Activated CD8-positive, alpha-beta memory T cell treated with anti-CD3 and anti-CD28 coated beads, Interleukin-2, amount 10 ng/mL, durations not matched to agents 7 days and 5 days (primary cell): ENCODE measurements at regions of chr10 and their contacts with region 1.

Region 1: GRCh38 chr10:29998142-29998808 is 61.1 kb downstream of the JCAD start:
- DNase-seq: peak; percentile 87
- ATAC-seq: peak; percentile 84
- H3K4me3 Mint-ChIP-seq: no peak overlapping the region
- H3K27ac Mint-ChIP-seq: no peak overlapping the region
- H3K4me1 Mint-ChIP-seq: peaks cover 17% of the 10 kb centered on the region
- H3K27me3 Mint-ChIP-seq: peaks cover 49% of the 10 kb centered on the region

Region 2: GRCh38 chr10:29555746-29556481 is 442.4 kb before region 1 on chr10:
- CTCF ChIA-PET with region 1: no interaction called
- DNase-seq: no peak
- ATAC-seq: no peak
- H3K4me3 Mint-ChIP-seq: no peak overlapping the region
- H3K27ac Mint-ChIP-seq: no peak overlapping the region
- H3K4me1 Mint-ChIP-seq: peaks cover 9% of the 10 kb centered on the region
- H3K27me3 Mint-ChIP-seq: no peaks in the 10 kb centered on the region

Region 3: GRCh38 chr10:30013757-30014156 is 15.5 kb after region 1 on chr10:
- CTCF ChIA-PET with region 1: interaction called, 17 read pairs
- DNase-seq: no peak
- ATAC-seq: no peak
- H3K4me3 Mint-ChIP-seq: no peak overlapping the region
- H3K27ac Mint-ChIP-seq: peak overlapping the region; percentile 37
- H3K4me1 Mint-ChIP-seq: peaks cover 34% of the 10 kb centered on the region
- H3K27me3 Mint-ChIP-seq: peaks cover 21% of the 10 kb centered on the region

Region 4: DNA sequence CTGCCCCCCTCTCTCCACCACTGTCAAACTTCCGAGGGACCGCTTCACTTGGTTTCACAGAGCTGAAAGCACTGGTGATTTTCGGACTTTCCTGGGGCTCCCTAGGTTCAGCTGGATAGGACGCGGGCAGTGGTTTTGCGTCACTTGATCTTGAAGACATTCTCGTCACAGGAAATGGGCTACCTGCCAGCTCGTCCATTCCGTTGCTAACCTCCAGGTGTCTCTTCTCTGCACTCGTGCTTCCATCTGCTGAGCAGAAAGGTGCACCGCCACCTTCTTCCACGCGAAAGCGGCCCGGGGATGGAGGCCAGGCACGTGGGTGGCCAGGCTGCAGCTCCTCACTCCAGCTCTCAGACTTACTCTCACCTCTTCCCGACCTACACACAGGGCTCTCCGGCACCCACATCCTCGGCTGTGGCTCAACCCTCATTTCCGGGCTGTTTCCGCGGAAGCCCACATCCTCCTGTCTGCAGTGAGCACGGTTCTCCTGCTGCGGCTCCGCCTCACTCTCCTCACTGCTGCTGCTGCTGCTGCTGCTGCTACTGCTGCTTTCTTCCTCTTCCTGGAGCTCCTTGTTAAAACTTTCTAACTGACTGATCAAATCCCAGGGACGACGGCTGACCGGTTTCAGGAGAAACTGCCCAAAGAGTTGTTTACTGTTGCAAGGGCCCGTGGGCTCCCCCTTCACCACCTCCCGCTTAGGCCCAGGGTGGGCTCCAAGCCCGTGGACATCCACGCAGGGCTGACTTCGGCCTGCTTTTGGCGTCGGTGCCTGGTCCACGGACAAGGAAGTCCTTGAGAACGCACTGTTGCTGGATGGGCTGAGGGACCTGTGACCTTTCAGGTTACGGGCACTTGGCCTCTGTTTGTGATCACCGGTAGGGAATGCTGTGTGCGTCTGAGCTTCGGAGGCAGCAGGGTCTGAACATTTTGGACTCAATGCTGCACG is 29.1 kb after region 1 on chr10:
- CTCF ChIA-PET with region 1: interaction called, 28 read pairs
- DNase-seq: peak; percentile 97
- ATAC-seq: peak; percentile 93
- H3K4me3 Mint-ChIP-seq: peak overlapping the region; percentile 66
- H3K27ac Mint-ChIP-seq: peak overlapping the region; percentile 84
- H3K4me1 Mint-ChIP-seq: peaks cover 49% of the 10 kb centered on the region
- H3K27me3 Mint-ChIP-seq: peaks cover 40% of the 10 kb centered on the region

Region 5: GRCh38 chr10:30241422-30242110 is 243.3 kb after region 1 on chr10:
- CTCF ChIA-PET with region 1: interaction called, 98 read pairs
- DNase-seq: no peak
- ATAC-seq: no peak
- H3K4me3 Mint-ChIP-seq: no peak overlapping the region
- H3K27ac Mint-ChIP-seq: no peak overlapping the region
- H3K4me1 Mint-ChIP-seq: peaks cover 7% of the 10 kb centered on the region
- H3K27me3 Mint-ChIP-seq: peaks cover 24% of the 10 kb centered on the region

Region 6: DNA sequence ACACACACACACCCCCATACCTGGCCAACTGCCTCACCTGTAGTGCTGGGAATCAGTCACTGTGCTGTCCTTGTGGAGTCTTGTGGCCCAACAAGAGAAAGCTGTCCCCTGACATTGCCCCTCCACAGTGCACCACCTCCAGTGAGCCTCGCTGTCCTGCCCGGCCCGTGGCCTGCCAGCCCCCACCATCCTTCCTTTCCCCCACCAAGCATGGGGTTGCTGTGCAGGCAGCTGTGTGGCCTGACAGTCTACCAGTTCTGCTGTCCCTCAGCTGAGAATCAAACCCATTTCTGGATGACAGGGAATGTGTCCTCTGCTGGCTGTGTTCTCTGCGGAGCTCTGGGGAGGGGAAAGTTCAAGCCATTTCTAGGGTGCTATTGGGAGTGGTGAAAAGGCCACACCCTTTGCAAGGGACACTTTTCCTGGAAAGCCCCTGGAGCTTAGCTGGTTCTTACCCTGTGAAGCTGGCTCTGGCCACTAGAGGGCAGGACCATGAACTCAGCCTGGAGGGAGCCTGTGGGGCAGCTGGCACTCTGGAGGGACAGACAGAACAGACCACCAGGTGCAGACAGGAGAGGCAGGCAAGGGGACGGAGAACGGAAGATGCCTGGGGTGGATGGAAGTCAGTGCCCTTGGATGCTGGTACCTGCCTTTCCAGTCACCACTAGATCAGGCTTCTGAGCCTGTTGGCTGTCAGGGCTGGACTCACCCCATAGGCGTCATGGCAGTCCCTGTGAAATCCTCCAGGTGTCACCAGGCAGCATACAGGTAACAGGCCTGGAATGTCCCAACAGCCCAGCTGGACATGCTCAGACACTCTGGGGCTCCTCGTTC is 361.3 kb after region 1 on chr10:
- CTCF ChIA-PET with region 1: interaction called, 10 read pairs
- DNase-seq: peak; percentile 81
- ATAC-seq: peak; percentile 89
- H3K4me3 Mint-ChIP-seq: no peak overlapping the region
- H3K27ac Mint-ChIP-seq: no peak overlapping the region
- H3K4me1 Mint-ChIP-seq: peaks cover 9% of the 10 kb centered on the region
- H3K27me3 Mint-ChIP-seq: peaks cover 7% of the 10 kb centered on the region

Region 7: GRCh38 chr10:30392564-30392990 is 394.3 kb after region 1 on chr10:
- CTCF ChIA-PET with region 1: interaction called, 10 read pairs
- DNase-seq: peak; percentile 84
- ATAC-seq: peak; percentile 100
- H3K4me3 Mint-ChIP-seq: peak overlapping the region; percentile 46
- H3K27ac Mint-ChIP-seq: no peak overlapping the region
- H3K4me1 Mint-ChIP-seq: peaks cover 10% of the 10 kb centered on the region
- H3K27me3 Mint-ChIP-seq: peaks cover 30% of the 10 kb centered on the region